AG04450 (cell line): ENCODE measurements at regions of chr17 and their contacts with region 1.

Region 1: GRCh38 chr17:10683853-10684252 is 13.5 kb downstream of the SCO1 start:
- DNase-seq: no peak
- H3K4me3 ChIP-seq: no peak overlapping the region
- H3K27ac ChIP-seq: no peak overlapping the region
- H3K27me3 ChIP-seq: no peaks in the 10 kb centered on the region
- CTCF ChIP-seq: peak; percentile 54

Region 2: GRCh38 chr17:10631048-10631700 is 52.7 kb before region 1 on chr17:
- CTCF ChIA-PET with region 1: interaction called, 11 read pairs
- POLR2A ChIA-PET with region 1: no interaction called
- DNase-seq: no peak
- H3K4me3 ChIP-seq: no peak overlapping the region
- H3K27ac ChIP-seq: no peak overlapping the region
- H3K27me3 ChIP-seq: no peaks in the 10 kb centered on the region
- CTCF ChIP-seq: peak; percentile 88

Region 3: DNA sequence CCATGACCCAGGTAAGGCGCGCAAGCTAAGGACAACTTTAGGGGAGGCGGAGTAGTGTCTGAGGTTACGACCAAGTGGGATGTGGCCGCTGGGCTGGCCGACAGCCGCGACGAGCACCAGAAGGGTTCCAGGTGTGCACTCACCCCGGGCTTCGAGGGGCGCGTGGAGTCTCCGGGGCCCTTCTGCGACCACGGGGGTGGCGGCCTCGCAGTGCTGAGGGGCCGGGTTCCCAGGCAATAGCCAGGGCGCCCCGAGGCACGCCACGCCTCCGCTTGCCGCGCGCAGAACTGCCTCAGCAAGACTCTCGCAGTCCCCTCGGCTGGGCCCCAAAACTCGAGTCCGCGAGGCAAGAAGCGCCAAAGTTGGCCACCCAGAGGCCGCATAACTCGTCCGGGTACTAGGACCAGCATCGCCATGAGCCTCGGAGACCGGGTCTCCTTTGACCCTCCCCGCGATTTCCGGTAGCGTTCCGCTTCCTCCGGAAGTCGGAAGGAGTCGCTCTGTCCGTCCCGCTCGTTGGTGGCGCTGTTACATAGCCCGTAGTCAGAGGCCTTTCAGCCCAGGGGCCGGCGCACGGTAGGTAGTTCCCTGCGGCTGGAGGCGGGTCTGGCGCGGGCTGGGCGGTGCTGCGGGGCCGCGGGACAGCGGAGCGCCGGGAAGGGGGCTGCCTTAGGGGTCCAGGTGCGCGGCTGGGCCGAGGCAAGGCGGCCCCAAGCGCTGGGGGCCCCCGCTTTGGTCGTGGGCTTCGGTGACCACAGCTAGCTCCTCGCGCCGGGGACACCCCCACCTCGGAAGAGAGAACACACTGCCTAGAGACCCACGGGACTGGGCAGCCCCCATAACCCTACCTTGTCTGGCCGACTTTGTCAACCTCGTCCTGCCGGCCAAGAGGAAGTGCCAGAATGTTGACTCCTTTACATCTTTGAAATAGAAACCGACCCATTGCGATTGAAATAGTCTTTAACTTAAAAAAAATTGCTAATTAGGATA is 13.5 kb after region 1 on chr17 and contains the starts of genes ADPRM and SCO1:
- CTCF ChIA-PET with region 1: interaction called, 22 read pairs
- POLR2A ChIA-PET with region 1: no interaction called
- DNase-seq: peak; percentile 80
- H3K4me3 ChIP-seq: peak within 1 kb of the TSS; percentile 91
- H3K27ac ChIP-seq: peak within 1 kb of the TSS; percentile 91
- H3K27me3 ChIP-seq: no peaks in the 10 kb centered on the region
- CTCF ChIP-seq: peak; percentile 56
- polyA plus RNA-seq, gene ADPRM: 11.8 and 15.1 TPM in 2 replicates
- polyA plus RNA-seq, gene SCO1: 25.1 and 28.5 TPM in 2 replicates